Ovary (tissue), 10 donors: ENCODE measurements at regions of chr7 and their contacts with region 1.

Region 1: GRCh38 chr7:107725151-107725740 is 18.7 kb upstream of the CBLL1 start:
- DNase-seq: peak in 4 of 5 donors; percentile 21 to 69 (median 38)
- H3K4me3 ChIP-seq: no peak overlapping the region
- H3K27ac ChIP-seq: no peak overlapping the region
- H3K4me1 ChIP-seq: no peaks in the 10 kb centered on the region
- H3K27me3 ChIP-seq: no peaks in the 10 kb centered on the region
- CTCF ChIP-seq: peak; percentile 51 to 78 (median 70)
- EP300 ChIP-seq: no peak
- POLR2A ChIP-seq: no peak

Region 2: DNA sequence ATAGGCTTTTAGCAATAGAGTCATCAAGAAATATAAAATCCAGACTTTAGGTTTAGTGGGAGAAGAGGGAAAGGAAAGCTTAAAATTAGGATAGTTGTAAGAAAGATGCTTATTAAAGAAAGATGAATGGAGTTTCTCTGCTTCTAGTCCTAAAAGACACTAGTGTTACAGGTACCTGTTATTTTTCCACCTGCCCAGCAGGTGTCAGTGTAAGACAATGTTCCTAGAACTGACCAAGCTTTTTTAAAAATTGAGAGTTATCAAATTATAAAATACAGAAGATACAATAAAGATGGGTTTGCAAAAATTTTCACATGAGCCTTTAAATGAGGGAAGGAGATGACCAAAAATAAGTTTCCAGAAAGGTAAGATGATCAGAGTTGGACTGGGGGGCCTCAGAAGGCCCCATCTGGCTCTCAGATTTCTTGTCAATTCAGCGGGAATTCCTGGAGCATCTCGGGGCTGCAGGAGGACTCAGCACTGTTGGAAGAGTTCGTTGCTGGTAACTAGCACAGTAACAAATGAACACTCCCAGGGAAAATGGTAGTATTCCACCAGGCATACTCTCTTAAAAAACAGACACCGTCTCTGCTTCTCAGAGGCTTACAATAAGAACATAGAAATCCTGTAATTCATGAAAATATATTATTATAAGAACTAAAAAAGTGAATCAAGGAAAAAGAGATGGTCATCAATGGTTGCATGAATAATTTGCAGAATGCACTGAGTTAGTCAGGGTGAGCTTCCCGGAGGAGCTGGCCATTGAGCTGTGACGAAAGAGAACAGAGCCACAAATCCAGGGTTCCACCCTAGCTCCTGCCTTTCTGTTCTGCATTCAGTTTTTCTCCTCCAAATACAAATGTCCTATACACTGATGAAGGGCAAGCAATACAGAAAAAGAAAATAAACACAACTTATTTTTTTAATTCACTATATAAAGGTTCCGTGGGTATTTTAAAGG is 932.0 kb before region 1 on chr7:
- intact Hi-C with region 1: loop called in 1 of 4 experiments (anchors 10 kb)
- DNase-seq: no peak
- H3K4me3 ChIP-seq: no peak overlapping the region
- H3K27ac ChIP-seq: no peak overlapping the region
- H3K4me1 ChIP-seq: no peaks in the 10 kb centered on the region
- H3K27me3 ChIP-seq: no peaks in the 10 kb centered on the region
- CTCF ChIP-seq: peak in 2 of 3 donors; percentile 46 to 48
- EP300 ChIP-seq: no peak
- POLR2A ChIP-seq: no peak

Region 3: DNA sequence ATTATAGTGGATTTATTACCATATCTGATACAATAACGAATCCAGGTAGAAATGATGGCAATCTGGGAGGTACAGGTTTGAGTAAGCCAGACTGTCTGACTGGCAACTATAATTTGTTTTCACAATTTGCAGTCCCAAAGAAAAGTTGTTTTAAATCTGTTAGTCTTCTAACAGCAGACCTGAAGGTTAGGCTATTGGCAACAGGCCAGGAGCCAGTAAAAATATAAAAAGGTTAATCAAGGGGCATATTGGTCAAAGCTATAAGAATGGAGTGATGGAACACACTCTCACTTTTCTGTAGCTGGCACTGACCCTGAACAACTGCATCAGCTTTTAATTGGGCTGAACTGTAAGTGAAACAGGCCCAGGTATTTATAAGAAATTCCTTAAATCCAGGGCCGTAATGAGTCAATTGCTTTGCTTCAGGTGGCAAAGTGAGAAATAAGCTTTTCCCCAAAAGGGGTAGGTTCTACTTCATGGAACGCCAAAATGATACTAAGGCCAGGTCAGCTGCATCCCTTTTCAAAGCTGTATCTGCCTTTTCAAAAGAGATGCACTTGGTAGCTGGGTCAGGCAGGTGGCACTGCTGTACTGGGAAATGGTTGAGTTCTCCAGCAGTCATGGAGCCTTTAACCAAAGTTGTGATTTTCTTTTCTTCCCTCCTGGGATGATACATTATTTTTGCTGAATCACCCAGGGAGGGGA is 262.4 kb before region 1 on chr7:
- intact Hi-C with region 1: loop called in 3 of 4 experiments (anchors 2 to 5 kb)
- DNase-seq: peak; percentile 50 to 75 (median 64)
- H3K4me3 ChIP-seq: no peak overlapping the region
- H3K27ac ChIP-seq: no peak overlapping the region
- H3K4me1 ChIP-seq: no peaks in the 10 kb centered on the region
- H3K27me3 ChIP-seq: no peaks in the 10 kb centered on the region
- CTCF ChIP-seq: peak; percentile 28 to 79 (median 70)
- EP300 ChIP-seq: no peak
- POLR2A ChIP-seq: no peak

Region 4: DNA sequence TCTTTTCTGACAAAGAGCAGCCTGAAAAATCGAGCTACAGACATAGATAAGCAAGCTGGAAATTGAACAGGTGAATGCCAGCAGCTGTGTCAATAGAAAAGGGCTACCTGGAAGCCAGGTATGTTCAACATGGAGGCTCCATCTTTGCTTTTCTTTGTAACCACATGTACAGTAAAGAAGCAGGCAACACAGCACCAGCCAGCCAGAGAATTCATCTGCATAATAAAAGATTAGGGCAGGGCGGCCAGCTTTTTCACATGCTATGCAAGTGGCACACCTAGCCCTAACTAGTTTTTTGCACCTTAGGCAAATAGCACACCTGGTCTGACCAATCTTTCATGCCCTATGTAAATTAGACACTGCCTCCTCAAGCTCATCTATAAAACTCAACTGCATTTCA is 187.2 kb before region 1 on chr7:
- intact Hi-C with region 1: no loop called
- DNase-seq: no peak
- H3K4me3 ChIP-seq: no peak overlapping the region
- H3K27ac ChIP-seq: no peak overlapping the region
- H3K4me1 ChIP-seq: no peaks in the 10 kb centered on the region
- H3K27me3 ChIP-seq: no peaks in the 10 kb centered on the region
- CTCF ChIP-seq: no peak
- EP300 ChIP-seq: no peak
- POLR2A ChIP-seq: no peak

Region 5: DNA sequence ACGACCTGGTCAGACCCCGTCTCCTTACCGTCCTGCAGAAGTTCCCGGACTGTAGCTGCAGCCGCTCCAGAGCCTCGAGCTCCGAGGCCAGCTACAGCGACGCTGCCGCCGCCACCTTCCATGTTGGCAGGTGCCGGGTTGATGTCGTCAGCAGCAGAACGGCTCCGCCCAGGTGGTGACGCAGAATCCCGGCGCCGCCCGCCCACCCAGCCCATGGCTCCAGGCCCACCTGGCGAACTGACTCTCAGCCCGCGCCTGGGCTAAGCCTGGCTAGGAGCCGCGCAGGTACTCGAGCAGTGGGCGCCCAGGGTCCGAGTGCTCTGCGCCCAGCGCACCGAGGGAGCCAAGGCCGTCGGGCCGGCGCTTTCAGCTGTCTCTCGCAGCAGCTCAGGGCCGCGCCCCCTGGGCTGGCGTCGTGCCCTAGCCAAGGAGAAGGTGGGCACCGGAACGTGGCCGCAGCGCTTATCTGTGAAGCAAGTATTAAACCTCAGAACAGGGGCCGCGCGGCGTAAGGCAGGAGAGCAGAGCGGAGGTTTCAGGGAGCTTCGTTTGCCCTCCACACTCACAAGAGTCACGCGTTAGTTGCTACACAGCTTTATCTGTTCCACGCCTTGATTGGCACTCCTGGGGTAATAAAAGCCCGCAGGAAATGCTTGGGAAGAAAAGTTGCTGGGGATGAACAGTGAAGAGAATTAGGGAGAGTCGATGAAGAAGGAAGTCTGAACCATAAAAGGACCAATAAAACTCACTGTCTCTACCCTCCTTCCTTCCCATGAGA is 161.3 kb before region 1 on chr7 and contains the starts of genes COG5 and DUS4L:
- intact Hi-C with region 1: loop called in 1 of 4 experiments (anchors 10 kb)
- DNase-seq: peak; percentile 84 to 91 (median 88)
- H3K4me3 ChIP-seq: peak within 1 kb of the TSS; percentile 92
- H3K27ac ChIP-seq: peak within 1 kb of the TSS; percentile 40 to 83
- H3K4me1 ChIP-seq: no peaks in the 10 kb centered on the region
- H3K27me3 ChIP-seq: no peaks in the 10 kb centered on the region
- CTCF ChIP-seq: no peak
- EP300 ChIP-seq: no peak
- POLR2A ChIP-seq: peak; percentile 75
- total RNA-seq, gene COG5: 32.7 to 49.7 (median 38.4) TPM
- total RNA-seq, gene DUS4L: 4.4 to 8.1 (median 5.4) TPM